GM13976 (cell line): ENCODE measurements at regions of chr1 and their contacts with region 1.

Region 1: GRCh38 chr1:202501281-202501680 is 152.8 kb downstream of the PPP1R12B start:
- DNase-seq: peak; percentile 7
- CTCF ChIP-seq: peak; percentile 21

Region 2: GRCh38 chr1:202565890-202566602 is 64.8 kb after region 1 on chr1:
- in situ Hi-C with region 1: loop called (anchors 10 kb)
- DNase-seq: peak; percentile 49
- CTCF ChIP-seq: no peak